ENCODE measurements at regions of chr11 and their contacts with region 1.

Region 1: GRCh38 chr11:68704887-68705286 is 20.5 kb downstream of the GAL start:
- DNase-seq: no peak
- H3K4me3 ChIP-seq: no peak overlapping the region
- H3K27ac ChIP-seq: no peak overlapping the region
- H3K4me1 ChIP-seq: no peaks in the 10 kb centered on the region
- H3K27me3 ChIP-seq: no peaks in the 10 kb centered on the region
- CTCF ChIP-seq: no peak
- EP300 ChIP-seq: no peak
- POLR2A ChIP-seq: no peak

Region 2: GRCh38 chr11:67983951-67984350 is 720.9 kb before region 1 on chr11:
- intact Hi-C with region 1: loop called in 1 of 4 experiments (anchors 10 kb)
- DNase-seq: no peak
- H3K4me3 ChIP-seq: no peak overlapping the region
- H3K27ac ChIP-seq: no peak overlapping the region
- H3K4me1 ChIP-seq: no peaks in the 10 kb centered on the region
- H3K27me3 ChIP-seq: no peaks in the 10 kb centered on the region
- CTCF ChIP-seq: no peak
- EP300 ChIP-seq: no peak
- POLR2A ChIP-seq: no peak